ENCODE measurements at regions of chr16 and their contacts with region 1.

Region 1: GRCh38 chr16:3611146-3611975 is at the start of gene SLX4:
- DNase-seq: peak; percentile 94
- H3K4me3 Mint-ChIP-seq: peak within 1 kb of the TSS; percentile 100
- H3K27ac Mint-ChIP-seq: peak within 1 kb of the TSS; percentile 99
- H3K4me1 Mint-ChIP-seq: peaks cover 57% of the 10 kb centered on the region
- H3K27me3 Mint-ChIP-seq: no peaks in the 10 kb centered on the region
- total RNA-seq, gene SLX4: 14.3 to 14.9 TPM

Region 2: GRCh38 chr16:3578610-3579551 is 32.5 kb before region 1 on chr16:
- CTCF ChIA-PET with region 1: no interaction called
- POLR2A ChIA-PET with region 1: interaction called, 33 read pairs
- DNase-seq: peak; percentile 87
- H3K4me3 Mint-ChIP-seq: peak overlapping the region; percentile 99
- H3K27ac Mint-ChIP-seq: peak overlapping the region; percentile 99
- H3K4me1 Mint-ChIP-seq: peaks cover 58% of the 10 kb centered on the region
- H3K27me3 Mint-ChIP-seq: no peaks in the 10 kb centered on the region

Region 3: GRCh38 chr16:3625911-3626732 is 14.8 kb after region 1 on chr16:
- CTCF ChIA-PET with region 1: interaction called, 5 read pairs
- POLR2A ChIA-PET with region 1: interaction called, 25 read pairs
- DNase-seq: no peak
- H3K4me3 Mint-ChIP-seq: peak overlapping the region; percentile 6
- H3K27ac Mint-ChIP-seq: peak overlapping the region; percentile 78
- H3K4me1 Mint-ChIP-seq: peaks cover 32% of the 10 kb centered on the region
- H3K27me3 Mint-ChIP-seq: no peaks in the 10 kb centered on the region

Region 4: GRCh38 chr16:3745751-3746355 is 134.5 kb after region 1 on chr16:
- CTCF ChIA-PET with region 1: no interaction called
- POLR2A ChIA-PET with region 1: no interaction called
- DNase-seq: no peak
- H3K4me3 Mint-ChIP-seq: no peak overlapping the region
- H3K27ac Mint-ChIP-seq: no peak overlapping the region
- H3K4me1 Mint-ChIP-seq: peaks cover 12% of the 10 kb centered on the region
- H3K27me3 Mint-ChIP-seq: no peaks in the 10 kb centered on the region

Measured in activated CD4-positive, alpha-beta memory T cell treated with anti-CD3 and anti-CD28 coated beads, Interleukin-2, amount 10 ng/mL, durations not matched to agents 7 days and 5 days (primary cell).